Colonic mucosa (tissue), 4 donors: ENCODE measurements at regions of chr18 and their contacts with region 1.

Region 1: DNA sequence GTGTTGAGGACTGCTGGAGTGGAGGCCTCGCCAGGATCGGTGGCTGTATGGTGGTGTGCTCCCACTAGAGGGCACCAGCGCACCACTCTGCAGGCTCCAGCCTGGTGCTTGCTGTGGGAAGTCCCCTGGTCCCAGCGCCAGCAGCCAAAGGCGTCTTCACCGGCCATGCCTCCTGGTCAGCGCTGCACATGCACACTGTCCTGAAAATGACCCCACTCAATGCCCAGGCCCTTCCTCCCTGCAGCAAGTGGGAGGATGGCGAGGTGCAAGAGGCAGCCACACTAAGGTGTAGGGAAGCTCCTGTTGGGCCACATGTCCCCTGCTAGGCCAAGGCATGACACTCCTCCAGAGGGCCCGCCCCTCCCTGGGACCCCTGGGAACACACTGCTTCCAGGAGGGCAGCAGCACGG is 136.5 kb downstream of the CTIF start:
- DNase-seq: peak; percentile 88
- H3K4me3 ChIP-seq: no peak overlapping the region
- H3K27ac ChIP-seq: no peak overlapping the region
- H3K4me1 ChIP-seq: peaks cover 7% of the 10 kb centered on the region
- H3K27me3 ChIP-seq: no peaks in the 10 kb centered on the region
- CTCF ChIP-seq: peak; percentile 92

Region 2: GRCh38 chr18:48913201-48913600 is 237.8 kb after region 1 on chr18:
- intact Hi-C with region 1: loop called (anchors 10 kb)
- DNase-seq: peak; percentile 41
- H3K4me3 ChIP-seq: no peak overlapping the region
- H3K27ac ChIP-seq: no peak overlapping the region
- H3K4me1 ChIP-seq: no peaks in the 10 kb centered on the region
- H3K27me3 ChIP-seq: no peaks in the 10 kb centered on the region
- CTCF ChIP-seq: peak; percentile 29

Region 3: GRCh38 chr18:49178736-49179135 is 503.4 kb after region 1 on chr18:
- intact Hi-C with region 1: loop called (anchors 5 kb)
- DNase-seq: peak; percentile 29
- H3K4me3 ChIP-seq: no peak overlapping the region
- H3K27ac ChIP-seq: no peak overlapping the region
- H3K4me1 ChIP-seq: no peaks in the 10 kb centered on the region
- H3K27me3 ChIP-seq: no peaks in the 10 kb centered on the region
- CTCF ChIP-seq: peak; percentile 24

Region 4: GRCh38 chr18:49412679-49413078 is 737.3 kb after region 1 on chr18:
- intact Hi-C with region 1: loop called (anchors 10 kb)
- DNase-seq: no peak
- H3K4me3 ChIP-seq: no peak overlapping the region
- H3K27ac ChIP-seq: no peak overlapping the region
- H3K4me1 ChIP-seq: no peaks in the 10 kb centered on the region
- H3K27me3 ChIP-seq: no peaks in the 10 kb centered on the region
- CTCF ChIP-seq: no peak